Heart right ventricle (tissue), 16 donors: ENCODE measurements at regions of chr12 and their contacts with region 1.

Region 1: DNA sequence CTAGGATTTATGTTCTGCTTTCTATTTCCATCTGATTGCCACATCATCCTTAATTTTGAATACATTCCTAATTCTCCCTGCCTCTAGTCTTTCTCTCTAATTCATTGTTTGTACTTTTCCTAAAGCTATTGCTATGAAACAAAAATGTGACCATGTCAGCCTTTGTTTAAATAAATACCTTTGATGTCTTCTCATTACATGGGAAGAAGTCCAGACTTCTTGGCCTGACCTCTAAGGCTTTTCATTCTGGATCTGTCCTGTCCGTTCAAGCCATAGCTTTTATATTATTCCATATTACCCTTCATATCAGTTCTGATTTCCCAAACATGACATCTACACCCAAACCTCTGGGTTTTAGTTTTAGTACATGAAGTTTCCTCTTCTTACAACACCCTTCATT is 91.4 kb downstream of the CDK17 start:
- DNase-seq: no peak
- ATAC-seq: no peak
- H3K4me3 ChIP-seq: no peak overlapping the region
- H3K27ac ChIP-seq: no peak overlapping the region
- H3K4me1 ChIP-seq: peaks cover 0 to 5% (median 2%) of the 10 kb centered on the region in 9 donors
- H3K27me3 ChIP-seq: no peaks in the 10 kb centered on the region
- CTCF ChIP-seq: no peak

Region 2: DNA sequence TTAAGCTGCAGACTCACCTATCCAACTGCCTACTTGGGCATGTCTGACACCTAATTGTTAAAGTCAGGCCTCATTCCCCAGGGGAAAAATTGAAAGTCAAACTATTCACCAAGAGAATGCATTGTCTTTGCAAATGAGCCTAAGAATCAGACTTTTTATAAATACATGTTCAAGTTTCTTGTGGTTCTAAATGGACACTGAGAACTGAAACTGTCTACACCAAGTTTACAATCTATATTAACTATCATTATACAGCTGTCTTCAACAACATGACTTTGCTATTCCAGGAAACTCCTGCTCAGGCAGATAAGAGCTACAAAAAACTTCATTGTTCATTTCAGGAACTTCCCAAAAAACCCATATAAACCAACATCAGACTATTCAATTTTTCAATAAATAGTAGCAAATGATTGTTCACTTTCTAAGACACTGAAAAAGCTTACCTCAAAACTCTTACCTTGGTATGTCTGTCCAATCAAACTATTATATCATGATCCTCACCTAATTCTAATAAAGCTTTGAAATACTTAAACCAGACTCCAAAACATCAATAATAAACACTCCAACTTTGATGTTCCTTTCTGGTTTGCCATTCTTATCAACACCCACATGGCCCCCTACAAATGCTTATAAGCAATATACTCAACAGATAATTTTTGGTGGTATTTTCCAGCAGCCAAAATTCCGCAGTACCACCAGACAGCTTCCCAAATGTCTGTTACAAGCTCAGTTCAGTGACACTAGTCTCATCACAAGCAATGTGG is 67.1 kb after region 1 on chr12:
- intact Hi-C with region 1: loop called in 1 of 10 experiments (anchors 5 kb)
- DNase-seq: no peak
- ATAC-seq: peak; percentile 25 to 77 (median 62)
- H3K4me3 ChIP-seq: no peak overlapping the region
- H3K27ac ChIP-seq: peak overlapping the region in 7 of 10 donors; percentile 41 to 74 (median 56)
- H3K4me1 ChIP-seq: peaks cover 5 to 82% (median 60%) of the 10 kb centered on the region in 9 donors
- H3K27me3 ChIP-seq: no peaks in the 10 kb centered on the region
- CTCF ChIP-seq: no peak